Left colon (tissue), 2 donors: ENCODE measurements at regions of chr14 and their contacts with region 1.

Region 1: GRCh38 chr14:102524466-102525218 is 15.1 kb upstream of the ANKRD9 start:
- DNase-seq: peak; percentile 99 to 100
- ATAC-seq: peak; percentile 79

Region 2: DNA sequence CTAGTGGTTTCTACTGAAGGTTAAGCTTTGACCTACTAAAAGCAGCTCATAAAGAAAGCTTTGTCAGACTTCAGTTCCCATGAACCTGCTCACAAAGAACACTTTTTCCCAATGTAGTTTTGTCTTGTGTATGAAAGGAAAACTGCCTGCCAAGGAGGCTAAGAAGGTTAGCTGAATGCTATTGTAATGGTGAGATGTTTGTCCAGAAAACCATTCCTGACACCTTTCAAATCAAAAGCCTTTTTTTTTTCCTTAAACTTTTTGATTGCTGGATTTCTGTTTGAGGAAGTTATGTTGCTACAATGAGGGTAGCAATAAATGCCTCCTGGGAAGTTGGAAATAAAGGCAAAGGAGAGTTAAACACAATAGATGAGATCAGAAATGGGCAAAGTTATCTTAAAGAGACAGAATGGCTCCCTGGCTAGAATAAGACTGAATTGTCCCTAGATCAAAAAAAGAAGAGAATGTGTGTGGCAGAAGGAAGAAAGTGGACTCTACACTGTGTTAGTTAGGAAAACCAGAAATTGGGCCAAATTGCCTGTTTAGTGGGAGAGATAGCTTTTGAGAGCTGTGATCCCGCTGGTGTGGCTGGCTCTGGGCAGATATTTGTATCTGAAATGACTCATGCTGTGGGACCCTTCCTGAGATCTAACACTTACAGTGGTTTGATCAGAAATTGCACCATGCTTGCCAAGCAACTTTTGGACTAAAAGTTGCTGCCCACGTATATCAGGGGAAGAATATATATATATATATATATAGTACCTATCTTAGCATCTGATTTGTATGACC is 134.4 kb before region 1 on chr14:
- intact Hi-C with region 1: no loop called
- DNase-seq: no peak
- ATAC-seq: peak; percentile 86

Region 3: DNA sequence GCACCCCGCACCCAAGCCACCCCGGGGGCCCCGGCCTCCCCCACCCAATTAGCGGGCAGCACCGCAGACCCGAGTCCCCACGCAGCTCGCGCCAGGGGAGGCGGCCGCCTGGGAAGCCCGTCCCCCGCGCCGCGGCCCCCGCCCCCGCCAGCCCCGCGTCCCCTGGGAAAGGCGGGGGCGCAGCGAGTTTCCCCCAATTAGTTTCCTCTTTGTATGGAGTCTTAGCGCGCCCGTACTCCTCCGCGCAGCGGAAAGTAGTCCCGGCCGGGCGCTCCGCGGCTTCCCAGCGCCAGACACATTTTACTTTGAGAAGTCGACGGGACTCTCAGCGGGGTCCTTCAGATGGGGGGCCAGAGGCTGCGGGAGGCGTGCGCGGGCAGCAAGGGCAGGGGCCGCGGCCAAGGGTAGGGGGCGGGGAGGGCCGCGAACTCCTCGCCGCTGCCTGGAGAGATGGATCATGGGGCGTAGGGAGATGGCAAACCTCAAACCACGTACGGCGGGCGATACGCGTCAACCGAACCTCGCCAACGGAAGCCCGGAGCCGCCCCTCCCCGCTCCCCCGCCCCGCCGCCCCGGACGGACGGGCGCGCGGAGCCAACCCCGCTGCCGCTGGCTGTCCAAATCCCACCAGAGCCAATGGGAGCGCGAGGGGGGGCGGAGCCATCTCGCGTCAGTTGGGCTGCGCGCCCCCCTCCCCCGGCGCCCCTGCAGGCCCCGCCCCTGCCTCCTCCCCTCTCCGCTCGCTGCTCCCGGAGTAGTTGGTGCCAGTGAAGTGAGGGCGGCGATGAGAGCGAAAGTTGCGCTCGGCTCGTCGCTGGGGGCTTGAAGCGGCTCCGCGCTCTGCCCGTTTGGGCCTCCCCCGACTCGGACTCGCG is 67.5 kb after region 1 on chr14 and contains the start of gene RCOR1:
- intact Hi-C with region 1: loop called in 1 of 2 experiments (anchors 5 kb)
- DNase-seq: peak; percentile 97 to 99
- ATAC-seq: peak; percentile 87
- total RNA-seq, gene RCOR1: 35.7 to 36.2 TPM